ENCODE measurements at regions of chr10 and their contacts with region 1.

Region 1: DNA sequence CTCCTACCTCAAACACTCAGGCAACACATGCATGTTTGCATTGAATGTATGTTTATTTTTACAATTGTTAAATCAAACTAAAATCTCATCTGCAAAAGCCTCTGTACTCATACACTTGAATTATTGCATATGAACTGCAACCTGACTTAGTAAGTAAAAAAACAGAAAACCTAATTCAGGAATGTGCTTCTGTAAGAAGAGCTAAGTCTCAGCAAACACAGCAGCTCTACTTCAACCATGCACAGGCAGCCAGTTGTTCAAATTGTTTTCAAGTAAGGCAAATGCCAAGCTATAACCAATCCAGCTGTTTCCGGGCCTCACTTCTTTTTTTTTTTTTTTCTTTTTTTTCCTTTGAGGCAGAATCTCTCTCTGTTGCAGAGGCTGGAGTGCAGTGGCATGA is 93.5 kb upstream of the MALRD1 start:
- DNase-seq: no peak
- ATAC-seq: no peak
- H3K4me3 ChIP-seq: no peak overlapping the region
- H3K27ac ChIP-seq: no peak overlapping the region
- H3K4me1 ChIP-seq: no peaks in the 10 kb centered on the region
- H3K27me3 ChIP-seq: no peaks in the 10 kb centered on the region
- CTCF ChIP-seq: no peak

Region 2: GRCh38 chr10:18364987-18365775 is 589.9 kb before region 1 on chr10:
- intact Hi-C with region 1: no loop called
- DNase-seq: no peak
- ATAC-seq: no peak
- H3K4me3 ChIP-seq: no peak overlapping the region
- H3K27ac ChIP-seq: no peak overlapping the region
- H3K4me1 ChIP-seq: no peaks in the 10 kb centered on the region
- H3K27me3 ChIP-seq: no peaks in the 10 kb centered on the region
- CTCF ChIP-seq: no peak

Region 3: DNA sequence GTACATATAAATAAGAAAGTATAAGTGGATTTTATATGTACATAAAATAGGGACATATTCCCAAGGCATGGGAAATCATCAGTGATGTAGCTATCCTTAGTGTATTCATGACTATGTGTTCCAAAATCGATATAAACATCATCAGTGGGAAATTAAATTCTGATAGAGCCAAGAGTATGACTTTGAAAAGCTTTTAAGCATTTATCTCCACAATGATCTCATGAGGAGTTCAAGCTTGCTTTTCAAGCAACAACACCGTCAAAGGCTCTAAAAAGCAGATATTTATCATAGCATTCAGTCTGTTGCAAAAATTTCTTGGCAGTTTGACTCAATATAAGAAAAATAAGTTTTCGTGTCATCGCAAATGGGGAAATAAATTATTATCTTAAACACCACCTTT is 1956.6 kb after region 1 on chr10:
- intact Hi-C with region 1: loop called in 1 of 2 experiments (anchors 10 kb)
- DNase-seq: no peak
- ATAC-seq: no peak
- H3K4me3 ChIP-seq: no peak overlapping the region
- H3K27ac ChIP-seq: no peak overlapping the region
- H3K4me1 ChIP-seq: no peaks in the 10 kb centered on the region
- H3K27me3 ChIP-seq: no peaks in the 10 kb centered on the region
- CTCF ChIP-seq: no peak